Left cardiac atrium (tissue), 4 donors: ENCODE measurements at regions of chr22 and their contacts with region 1.

Region 1: DNA sequence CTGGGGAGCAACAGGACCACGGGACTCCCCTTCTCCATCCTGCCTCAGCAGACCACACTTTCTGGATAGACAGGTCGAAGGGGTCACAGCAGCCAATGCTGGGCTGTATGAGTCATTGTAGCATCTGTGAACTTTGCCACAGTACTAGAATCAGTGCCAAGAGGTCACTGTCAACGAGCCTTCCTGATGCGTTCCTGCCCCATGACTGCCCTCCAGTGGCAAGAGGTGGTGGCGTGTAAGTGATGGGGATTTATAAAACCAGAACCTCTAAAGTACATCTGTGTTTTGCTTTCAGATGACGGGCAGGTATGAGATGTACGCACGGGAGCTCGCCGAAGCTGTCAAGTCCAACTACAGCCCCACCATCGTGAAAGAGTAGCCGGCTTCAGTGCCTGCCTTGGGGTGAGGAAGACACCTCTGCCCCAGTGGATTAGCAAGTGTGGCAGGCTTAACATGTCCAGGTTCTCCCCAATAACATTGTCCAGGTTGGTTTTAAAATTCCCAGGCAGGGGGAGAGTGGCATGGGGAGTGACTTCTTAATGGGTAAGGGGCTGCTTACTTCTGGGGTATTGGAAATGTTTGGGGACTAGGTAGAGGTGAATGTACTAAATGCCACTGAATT is 29.4 kb downstream of the GUCD1 start:
- DNase-seq: peak; percentile 85
- ATAC-seq: peak; percentile 69 to 78

Region 2: GRCh38 chr22:24325105-24325757 is 200.3 kb before region 1 on chr22:
- intact Hi-C with region 1: loop called (anchors 5 to 10 kb)
- DNase-seq: no peak
- ATAC-seq: peak; percentile 80 to 83